Posterior vena cava (tissue), 2 donors: ENCODE measurements at regions of chr17 and their contacts with region 1.

Region 1: GRCh38 chr17:6421700-6422604 is 13.0 kb downstream of the AIPL1 start:
- DNase-seq: peak; percentile 94

Region 2: GRCh38 chr17:5563456-5563855 is 858.5 kb before region 1 on chr17:
- intact Hi-C with region 1: no loop called
- DNase-seq: no peak

Region 3: GRCh38 chr17:5584383-5585286 is 837.3 kb before region 1 on chr17 and contains the start of gene NLRP1:
- intact Hi-C with region 1: loop called (anchors 2 to 5 kb)
- DNase-seq: peak; percentile 97
- total RNA-seq, gene NLRP1: 18.1 to 19.6 TPM

Region 4: DNA sequence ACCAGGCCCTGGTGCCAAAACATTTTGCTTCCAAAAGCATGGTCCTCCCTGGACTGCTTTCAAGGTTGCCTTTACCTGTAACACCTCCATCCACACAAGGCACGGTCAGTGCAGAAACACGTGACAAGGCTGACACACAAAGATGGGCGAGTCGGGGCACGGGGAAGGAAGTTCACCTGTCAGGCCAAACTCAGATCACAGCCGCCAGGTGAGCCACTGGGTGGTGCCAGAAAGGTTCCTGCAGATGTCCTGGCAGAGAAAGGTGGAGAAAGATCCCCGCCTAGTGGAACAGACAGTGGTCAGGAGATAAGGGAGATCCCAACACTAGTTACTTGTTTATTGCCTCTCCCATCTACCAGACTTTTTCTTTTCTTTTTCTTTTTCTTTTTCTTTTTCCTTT is 142.3 kb before region 1 on chr17:
- intact Hi-C with region 1: no loop called
- DNase-seq: no peak